B cell (primary cell): ENCODE measurements at regions of chr21 and their contacts with region 1.

Region 1: DNA sequence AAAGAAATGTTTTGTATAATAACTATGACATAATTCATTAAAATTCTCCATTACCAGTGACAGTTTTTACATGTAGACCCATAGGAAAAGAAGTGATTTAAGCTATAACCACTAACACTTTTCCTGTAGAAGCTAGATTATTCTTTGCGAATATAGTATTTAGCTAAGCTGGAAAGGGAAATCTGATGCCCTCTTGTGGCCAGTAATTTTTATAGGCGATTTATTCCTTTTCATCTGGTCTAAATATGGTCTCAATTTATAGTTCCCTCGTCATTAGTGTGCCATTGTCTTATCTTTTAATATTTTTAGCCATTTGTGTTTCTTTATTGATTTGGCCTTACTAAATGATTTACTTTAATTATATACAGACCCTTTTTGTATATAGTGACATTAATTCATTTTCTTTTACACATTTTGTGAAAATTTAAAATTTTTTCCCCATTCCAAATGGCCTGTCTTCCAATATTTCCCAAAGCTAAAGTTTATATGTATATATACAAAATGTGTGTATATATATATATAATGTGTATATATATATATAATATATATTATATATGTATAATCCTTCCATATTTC is 26.7 kb downstream of the BTG3 start:
- DNase-seq: peak; percentile 40
- ATAC-seq: no peak
- H3K4me3 ChIP-seq: no peak overlapping the region
- H3K4me3 Mint-ChIP-seq: no peak overlapping the region
- H3K27ac ChIP-seq: no peak overlapping the region
- H3K27ac Mint-ChIP-seq: no peak overlapping the region
- H3K4me1 ChIP-seq: no peaks in the 10 kb centered on the region
- H3K4me1 Mint-ChIP-seq: no peaks in the 10 kb centered on the region
- H3K27me3 ChIP-seq: no peaks in the 10 kb centered on the region
- H3K27me3 Mint-ChIP-seq: no peaks in the 10 kb centered on the region
- CTCF ChIP-seq: peak; percentile 58

Region 2: GRCh38 chr21:17387030-17387617 is 198.8 kb before region 1 on chr21:
- CTCF ChIA-PET with region 1: interaction called, 16 read pairs
- POLR2A ChIA-PET with region 1: no interaction called
- intact Hi-C with region 1: loop called (anchors 10 kb)
- DNase-seq: peak; percentile 56
- ATAC-seq: no peak
- H3K4me3 ChIP-seq: no peak overlapping the region
- H3K4me3 Mint-ChIP-seq: no peak overlapping the region
- H3K27ac ChIP-seq: no peak overlapping the region
- H3K27ac Mint-ChIP-seq: no peak overlapping the region
- H3K4me1 ChIP-seq: no peaks in the 10 kb centered on the region
- H3K4me1 Mint-ChIP-seq: peaks cover 2% of the 10 kb centered on the region
- H3K27me3 ChIP-seq: no peaks in the 10 kb centered on the region
- H3K27me3 Mint-ChIP-seq: no peaks in the 10 kb centered on the region
- CTCF ChIP-seq: peak; percentile 94